PC-3 (cell line): ENCODE measurements at regions of chr1 and their contacts with region 1.

Region 1: DNA sequence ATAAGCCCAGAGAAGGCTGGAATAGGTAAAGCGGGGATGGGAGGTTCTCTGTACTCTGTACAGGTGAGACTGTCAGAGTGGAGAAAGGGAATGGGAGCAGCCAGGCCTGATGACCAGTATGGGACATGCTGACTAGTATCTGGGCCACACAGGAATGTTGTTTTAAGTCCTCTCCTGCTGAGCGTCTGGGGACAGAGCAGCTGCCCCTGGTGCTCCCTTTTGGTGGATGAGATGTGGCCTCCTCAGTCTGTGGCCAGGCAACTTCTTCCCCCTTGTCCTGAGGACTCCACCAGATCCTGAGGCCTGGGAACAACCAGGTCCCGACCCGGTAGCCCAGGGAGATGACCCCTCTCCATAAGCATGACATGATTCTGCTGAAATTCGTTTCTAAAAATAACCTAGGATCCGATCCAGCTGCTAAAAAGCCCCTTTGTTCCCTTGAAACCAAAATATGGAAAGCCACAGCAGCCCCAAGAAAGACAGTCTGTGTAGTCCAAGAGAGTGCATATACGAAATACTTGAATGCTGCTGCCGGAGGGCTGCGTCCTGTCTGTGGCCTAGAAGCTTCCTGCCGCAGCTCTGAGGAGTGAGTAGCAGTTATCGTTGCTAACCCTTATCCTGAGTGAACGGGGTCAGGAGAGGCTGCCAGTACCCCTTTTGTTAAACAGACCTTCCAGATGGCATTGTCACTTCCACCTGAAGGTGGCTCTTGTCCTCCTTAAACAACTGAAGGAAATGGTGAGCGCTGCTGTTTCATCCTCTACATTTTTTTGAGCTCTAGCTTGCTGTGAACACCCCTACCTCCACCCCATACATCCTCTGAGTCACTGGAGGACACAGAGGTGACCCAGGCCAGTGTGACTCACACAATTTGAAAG is 47.2 kb downstream of the ATP2B4 start:
- DNase-seq: peak; percentile 98
- ATAC-seq: peak; percentile 91
- H3K4me3 ChIP-seq: peak overlapping the region; percentile 6; the same call in 1 of the 2 replicates
- H3K27ac ChIP-seq: peak overlapping the region; percentile 87
- H3K4me1 ChIP-seq: peaks cover 49% of the 10 kb centered on the region
- H3K27me3 ChIP-seq: no peaks in the 10 kb centered on the region
- CTCF ChIP-seq: peak; percentile 70

Region 2: GRCh38 chr1:203593723-203594122 is 80.1 kb before region 1 on chr1:
- CTCF ChIA-PET with region 1: interaction called, 12 read pairs
- POLR2A ChIA-PET with region 1: no interaction called
- intact Hi-C with region 1: no loop called
- DNase-seq: peak; percentile 69
- ATAC-seq: peak; percentile 25
- H3K4me3 ChIP-seq: no peak overlapping the region
- H3K27ac ChIP-seq: no peak overlapping the region
- H3K4me1 ChIP-seq: peaks cover 36% of the 10 kb centered on the region
- H3K27me3 ChIP-seq: no peaks in the 10 kb centered on the region
- CTCF ChIP-seq: peak; percentile 62

Region 3: DNA sequence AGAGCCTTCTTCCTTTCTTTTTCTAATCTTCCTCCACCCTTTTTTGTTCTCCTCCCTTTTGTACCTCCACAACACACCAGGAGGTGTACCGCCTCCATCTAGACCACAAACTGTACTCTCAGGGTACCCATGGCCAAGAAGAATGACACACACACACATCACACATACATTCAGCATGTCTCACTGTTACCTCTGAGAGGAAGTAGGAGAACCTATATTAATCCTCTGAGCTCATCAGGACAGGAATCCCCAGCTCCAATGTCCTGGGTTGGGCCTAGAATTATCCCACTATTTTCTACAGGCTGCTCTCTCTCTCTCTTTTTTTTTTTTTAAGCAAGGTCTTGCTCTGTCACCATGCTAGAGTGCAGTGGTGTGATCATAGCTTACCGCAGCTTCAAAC is 10.5 kb before region 1 on chr1:
- CTCF ChIA-PET with region 1: interaction called, 23 read pairs
- POLR2A ChIA-PET with region 1: no interaction called
- intact Hi-C with region 1: no loop called
- DNase-seq: peak; percentile 99
- ATAC-seq: peak; percentile 98
- H3K4me3 ChIP-seq: peak overlapping the region; percentile 31; the same call in 1 of the 2 replicates
- H3K27ac ChIP-seq: peak overlapping the region; percentile 95
- H3K4me1 ChIP-seq: peaks cover 36% of the 10 kb centered on the region
- H3K27me3 ChIP-seq: no peaks in the 10 kb centered on the region
- CTCF ChIP-seq: 0 out of 2 replicates have a peak, but pooled peaks have one; percentile 29

Region 4: DNA sequence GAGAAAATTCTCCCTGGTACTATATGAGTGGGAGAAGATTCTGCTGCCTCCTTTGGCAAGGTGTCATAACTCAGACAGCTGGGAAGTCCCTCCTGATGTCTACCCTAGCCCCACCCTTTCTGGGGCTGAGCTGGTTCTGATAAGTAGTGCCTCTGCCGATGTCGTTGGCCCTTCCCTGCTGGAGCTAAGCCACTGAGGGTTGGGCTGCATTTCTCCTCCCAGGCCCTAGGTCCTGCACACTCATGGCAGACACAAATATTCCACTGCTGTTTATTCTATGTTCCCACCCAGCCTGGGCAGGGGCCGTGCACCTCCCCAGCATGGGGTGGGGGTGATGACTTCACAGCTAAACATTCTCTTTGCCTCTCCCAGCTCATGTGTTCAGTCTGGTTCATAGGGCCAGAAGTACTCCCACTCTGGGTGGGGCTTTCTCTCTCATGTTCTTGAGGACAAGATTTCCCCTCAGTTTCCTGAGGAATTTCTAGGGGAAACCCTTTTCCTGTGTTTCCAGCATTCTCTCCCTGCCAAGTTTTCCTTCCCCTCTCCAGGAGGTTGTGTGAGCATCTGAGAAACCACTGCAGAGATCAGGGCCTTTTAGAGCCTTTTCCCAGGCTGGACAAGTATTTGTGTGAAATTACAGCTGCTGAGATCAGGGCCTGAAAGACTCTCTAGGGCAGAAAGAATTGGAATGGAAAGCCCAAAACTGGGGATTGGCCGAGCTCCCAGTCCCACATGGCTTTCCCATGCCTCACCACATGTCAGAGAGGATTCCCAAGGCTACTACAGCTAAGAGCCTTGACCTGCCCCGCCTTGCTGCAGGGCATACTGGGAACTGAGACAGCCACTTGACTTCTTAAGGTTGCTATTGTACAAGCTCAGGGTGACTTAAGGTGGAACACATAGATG is 19.0 kb after region 1 on chr1:
- CTCF ChIA-PET with region 1: interaction called, 25 read pairs
- POLR2A ChIA-PET with region 1: interaction called, 3 read pairs
- intact Hi-C with region 1: loop called (anchors 1 kb)
- DNase-seq: peak; percentile 93
- ATAC-seq: peak; percentile 87
- H3K4me3 ChIP-seq: no peak overlapping the region; the same call in 1 of the 2 replicates
- H3K27ac ChIP-seq: peak overlapping the region; percentile 99
- H3K4me1 ChIP-seq: peaks cover 26% of the 10 kb centered on the region
- H3K27me3 ChIP-seq: no peaks in the 10 kb centered on the region
- CTCF ChIP-seq: no peak

Region 5: DNA sequence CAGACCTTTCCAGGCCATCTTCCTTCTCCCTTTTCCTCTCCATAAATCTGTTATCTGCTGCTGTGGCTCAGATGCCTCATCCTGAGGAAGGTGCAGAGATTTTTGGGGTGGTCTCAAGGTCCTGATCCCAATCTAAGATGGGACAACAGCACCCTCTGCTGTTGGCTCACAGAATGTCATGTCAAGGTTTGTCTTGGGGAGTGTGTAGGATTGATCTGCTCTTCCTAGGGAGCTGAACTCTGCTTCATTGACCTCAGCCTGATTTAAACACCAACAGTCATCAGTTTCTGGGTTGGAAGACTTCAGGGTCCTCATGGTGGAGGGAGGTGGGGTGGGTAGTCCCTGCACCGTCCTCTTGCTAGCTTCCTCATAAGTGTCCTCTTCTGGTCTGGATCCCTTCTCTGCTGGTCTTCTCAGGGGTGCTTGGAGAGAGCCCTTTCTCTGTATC is 28.4 kb after region 1 on chr1:
- CTCF ChIA-PET with region 1: interaction called, 16 read pairs
- POLR2A ChIA-PET with region 1: no interaction called
- intact Hi-C with region 1: no loop called
- DNase-seq: peak; percentile 82
- ATAC-seq: peak; percentile 91
- H3K4me3 ChIP-seq: no peak overlapping the region
- H3K27ac ChIP-seq: no peak overlapping the region
- H3K4me1 ChIP-seq: no peaks in the 10 kb centered on the region
- H3K27me3 ChIP-seq: no peaks in the 10 kb centered on the region
- CTCF ChIP-seq: peak; percentile 100